ENCODE measurements at regions of chr4 and their contacts with region 1.

Region 1: DNA sequence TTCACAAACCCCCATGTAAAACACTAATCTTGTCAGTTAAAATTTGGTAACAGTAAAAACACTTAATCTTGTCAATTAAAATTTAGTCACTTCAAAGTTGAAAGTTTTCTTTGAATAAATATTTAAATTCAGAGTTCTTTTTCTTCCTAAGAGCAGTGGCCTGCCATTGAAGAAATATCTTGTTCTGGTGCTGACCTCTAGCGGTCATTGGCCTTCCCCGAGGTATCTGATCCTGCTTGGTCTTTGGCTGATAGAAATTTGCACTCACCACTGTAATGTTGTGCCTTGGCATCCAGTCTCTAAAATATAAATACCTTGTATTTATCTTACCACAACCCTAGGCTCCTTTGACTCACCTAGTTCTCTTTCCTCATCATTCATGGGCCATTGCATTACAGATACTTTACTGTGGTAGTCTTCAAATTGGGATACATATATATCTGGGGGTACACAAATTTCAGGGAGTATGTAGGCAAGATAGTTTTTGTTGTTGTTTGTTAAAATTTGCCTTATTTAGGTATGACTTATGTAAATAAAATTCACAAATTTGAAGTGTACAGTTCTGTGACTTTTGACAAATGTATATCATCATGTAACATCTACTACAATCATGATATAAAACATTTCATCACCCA is 6.7 kb upstream of the ART3 start:
- DNase-seq: peak; percentile 75
- CTCF ChIP-seq: peak; percentile 70

Region 2: DNA sequence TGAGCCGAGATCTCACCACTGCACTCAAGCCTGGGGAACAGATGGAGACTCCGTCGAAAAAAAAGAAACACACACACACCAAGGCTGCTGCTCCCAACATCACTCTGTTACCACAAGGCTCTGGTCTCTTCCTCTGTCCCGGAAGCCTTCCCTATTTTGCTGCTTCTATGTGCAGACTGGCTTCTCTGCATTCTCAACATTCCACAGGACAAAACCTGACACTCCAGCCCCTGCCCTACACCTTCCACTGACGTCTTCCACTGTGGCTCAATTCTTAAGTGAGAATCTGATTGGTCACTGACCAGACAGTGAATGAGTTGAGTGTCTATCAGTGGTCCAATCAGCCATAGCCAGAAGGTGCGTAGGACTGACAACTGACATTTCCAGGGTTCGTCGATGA is 506.0 kb before region 1 on chr4:
- in situ Hi-C with region 1: no loop called
- DNase-seq: no peak
- CTCF ChIP-seq: no peak

Region 3: DNA sequence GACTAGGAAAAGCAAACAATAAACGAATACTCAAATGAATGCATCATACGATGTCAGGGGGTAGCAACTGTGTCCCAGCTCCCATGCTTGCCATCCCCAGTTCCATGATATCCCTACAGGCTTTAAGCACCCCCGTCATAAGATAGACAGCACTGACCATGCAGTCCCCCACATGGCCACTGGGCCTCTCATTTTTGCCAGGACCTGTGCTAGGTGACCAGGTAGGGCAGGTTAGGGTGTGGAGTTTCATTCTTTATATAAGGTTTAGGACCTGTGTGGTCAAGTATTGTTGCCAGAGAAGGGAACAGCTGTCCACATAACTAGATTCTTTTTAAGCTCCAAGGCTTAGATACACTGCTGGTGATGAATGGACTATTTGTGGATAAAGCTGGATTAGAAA is 175.3 kb before region 1 on chr4:
- in situ Hi-C with region 1: no loop called
- DNase-seq: no peak
- CTCF ChIP-seq: no peak

Region 4: GRCh38 chr4:75908555-75908954 is 159.2 kb before region 1 on chr4:
- in situ Hi-C with region 1: loop called (anchors 10 kb)
- DNase-seq: no peak
- CTCF ChIP-seq: no peak

Region 5: DNA sequence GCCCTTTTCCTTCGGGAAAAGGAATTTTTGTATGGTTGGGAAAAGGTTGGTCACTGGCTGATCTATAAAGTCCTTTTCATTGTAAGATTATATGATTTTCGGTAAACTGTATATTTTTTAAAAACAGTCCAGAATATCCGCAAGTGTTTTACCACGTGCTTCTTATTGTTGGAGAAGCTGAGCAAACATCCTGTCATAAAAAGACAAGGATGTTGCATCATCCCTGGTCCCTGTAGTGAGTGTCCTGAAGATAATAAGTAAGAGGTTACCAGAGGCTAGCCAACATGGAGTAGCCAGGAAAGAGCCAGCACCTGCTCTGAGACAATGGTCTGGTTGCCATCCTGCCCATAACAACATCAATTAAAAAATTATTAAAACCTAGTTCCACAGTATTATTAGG is 65.6 kb before region 1 on chr4:
- in situ Hi-C with region 1: loop called (anchors 5 kb)
- DNase-seq: no peak
- CTCF ChIP-seq: no peak

Measured in GM13976 (cell line).